ENCODE measurements at regions of chr10 and their contacts with region 1.

Region 1: DNA sequence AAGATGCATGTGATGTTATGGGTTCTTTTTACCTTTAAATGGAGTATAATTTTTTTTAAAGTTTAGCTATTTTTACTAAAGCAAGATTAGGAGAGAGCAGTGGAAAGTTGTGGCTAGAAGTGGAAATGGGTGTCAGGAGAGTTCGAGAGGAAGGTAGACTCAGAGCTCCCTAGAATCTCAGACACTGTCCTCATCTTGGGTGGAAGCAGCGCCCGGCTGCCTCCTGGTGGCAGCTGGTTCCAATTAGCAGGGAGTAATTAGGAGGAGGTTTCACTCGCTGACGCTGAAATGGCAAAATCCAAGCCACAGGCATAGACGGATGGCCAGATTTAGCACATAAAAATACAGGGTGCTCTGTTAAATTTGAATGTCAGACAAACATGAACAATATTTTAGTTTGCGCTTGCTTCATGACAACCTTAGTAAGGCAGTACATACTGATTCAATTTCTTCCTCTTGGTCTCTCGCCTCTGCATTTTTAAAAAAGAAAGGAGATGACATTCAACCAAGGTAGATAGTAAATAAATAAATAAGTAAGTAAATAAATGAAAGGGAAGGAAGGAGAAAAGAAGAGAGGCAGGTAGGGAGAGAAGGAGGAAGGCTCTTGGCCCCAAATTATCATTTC is 58.5 kb downstream of the LGI1 start:
- DNase-seq: peak; percentile 60
- H3K27ac ChIP-seq: no peak overlapping the region
- CTCF ChIP-seq: peak; percentile 55

Region 2: GRCh38 chr10:93702211-93703001 is 113.8 kb before region 1 on chr10 and contains the start of gene FRA10AC1:
- CTCF ChIA-PET with region 1: interaction called, 21 read pairs
- POLR2A ChIA-PET with region 1: no interaction called
- DNase-seq: peak; percentile 96
- H3K27ac ChIP-seq: peak within 1 kb of the TSS; percentile 80
- CTCF ChIP-seq: peak; percentile 77

Region 3: DNA sequence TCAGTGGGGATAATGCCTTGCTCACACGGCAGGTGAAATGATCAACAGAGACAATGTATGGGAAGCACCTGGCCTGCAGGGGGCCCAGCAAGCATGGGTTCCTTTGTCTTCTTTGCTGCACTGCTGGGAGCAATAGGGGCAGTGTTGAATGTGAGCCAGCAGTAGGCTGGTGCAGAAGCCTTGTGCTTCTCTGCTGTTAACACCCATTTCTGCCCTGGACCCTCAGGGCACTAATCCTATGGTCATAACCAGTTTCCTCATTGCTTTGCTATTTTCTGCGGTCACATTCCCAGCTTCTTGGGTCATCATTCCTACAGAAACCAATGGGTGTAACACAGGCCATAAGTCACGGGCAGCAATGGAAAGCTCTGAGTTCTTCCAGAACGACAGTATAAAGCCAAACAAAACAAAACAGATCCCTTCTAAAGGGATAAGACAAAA is 69.4 kb before region 1 on chr10:
- CTCF ChIA-PET with region 1: interaction called, 11 read pairs
- POLR2A ChIA-PET with region 1: no interaction called
- DNase-seq: peak; percentile 96
- H3K27ac ChIP-seq: peak overlapping the region; percentile 27; the same call in 1 of the 2 replicates
- CTCF ChIP-seq: no peak